ENCODE measurements at regions of chr11 and their contacts with region 1.

Region 1: GRCh38 chr11:107549253-107549953 is 16.1 kb downstream of the ALKBH8 start:
- DNase-seq: peak; percentile 61
- H3K4me3 ChIP-seq: no peak overlapping the region
- H3K27ac ChIP-seq: no peak overlapping the region
- H3K4me1 ChIP-seq: no peaks in the 10 kb centered on the region
- CTCF ChIP-seq: peak; percentile 96

Region 2: DNA sequence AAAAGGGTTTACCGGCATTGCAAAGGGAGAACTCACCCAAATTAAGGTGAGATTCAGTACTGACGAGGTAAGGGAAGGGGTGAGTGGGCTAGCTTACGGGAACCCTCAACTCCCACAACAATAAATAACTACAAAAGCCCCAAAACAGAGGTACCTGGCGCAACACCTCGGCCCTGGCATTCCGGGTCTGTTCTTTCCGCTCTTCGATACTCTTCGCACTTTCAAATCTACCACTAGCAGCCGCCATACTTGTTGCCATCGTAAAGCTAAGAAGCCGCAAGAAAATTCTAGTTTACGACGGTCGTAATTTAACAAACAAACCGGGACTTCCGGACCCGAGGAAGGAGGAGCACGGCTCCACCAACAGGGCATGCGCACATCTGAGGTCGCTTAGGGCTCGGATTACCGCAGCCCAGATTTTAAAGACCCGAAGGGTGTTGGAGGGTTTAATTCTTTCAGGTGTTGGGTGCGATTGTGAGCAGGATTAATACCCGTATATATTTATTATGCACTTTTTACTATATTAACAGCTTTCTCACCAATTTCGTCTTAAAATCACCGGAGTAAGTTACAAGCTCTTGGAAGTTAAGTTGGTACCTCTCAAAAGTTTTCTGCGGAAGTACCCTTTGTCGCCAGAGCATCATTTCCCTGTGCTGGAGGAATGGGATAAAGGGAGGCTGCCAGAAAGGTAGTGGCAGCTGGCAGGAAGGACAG is 91.7 kb before region 1 on chr11 and contains the start of gene CWF19L2:
- CTCF ChIA-PET with region 1: no interaction called
- POLR2A ChIA-PET with region 1: no interaction called
- intact Hi-C with region 1: no loop called
- DNase-seq: peak; percentile 98
- H3K4me3 ChIP-seq: peak within 1 kb of the TSS; percentile 92
- H3K27ac ChIP-seq: peak within 1 kb of the TSS; percentile 77
- H3K4me1 ChIP-seq: peaks cover 16% of the 10 kb centered on the region
- CTCF ChIP-seq: 0 out of 2 replicates have a peak, but pooled peaks have one; percentile 11
- total RNA-seq, gene CWF19L2: 13.4 and 20.6 TPM in 2 replicates

Region 3: GRCh38 chr11:107606141-107606540 is 56.7 kb after region 1 on chr11:
- CTCF ChIA-PET with region 1: no interaction called
- POLR2A ChIA-PET with region 1: interaction called, 8 read pairs
- intact Hi-C with region 1: loop called (anchors 2 kb)
- DNase-seq: no peak
- H3K4me3 ChIP-seq: no peak overlapping the region
- H3K27ac ChIP-seq: no peak overlapping the region
- H3K4me1 ChIP-seq: no peaks in the 10 kb centered on the region
- CTCF ChIP-seq: peak; percentile 48

Region 4: DNA sequence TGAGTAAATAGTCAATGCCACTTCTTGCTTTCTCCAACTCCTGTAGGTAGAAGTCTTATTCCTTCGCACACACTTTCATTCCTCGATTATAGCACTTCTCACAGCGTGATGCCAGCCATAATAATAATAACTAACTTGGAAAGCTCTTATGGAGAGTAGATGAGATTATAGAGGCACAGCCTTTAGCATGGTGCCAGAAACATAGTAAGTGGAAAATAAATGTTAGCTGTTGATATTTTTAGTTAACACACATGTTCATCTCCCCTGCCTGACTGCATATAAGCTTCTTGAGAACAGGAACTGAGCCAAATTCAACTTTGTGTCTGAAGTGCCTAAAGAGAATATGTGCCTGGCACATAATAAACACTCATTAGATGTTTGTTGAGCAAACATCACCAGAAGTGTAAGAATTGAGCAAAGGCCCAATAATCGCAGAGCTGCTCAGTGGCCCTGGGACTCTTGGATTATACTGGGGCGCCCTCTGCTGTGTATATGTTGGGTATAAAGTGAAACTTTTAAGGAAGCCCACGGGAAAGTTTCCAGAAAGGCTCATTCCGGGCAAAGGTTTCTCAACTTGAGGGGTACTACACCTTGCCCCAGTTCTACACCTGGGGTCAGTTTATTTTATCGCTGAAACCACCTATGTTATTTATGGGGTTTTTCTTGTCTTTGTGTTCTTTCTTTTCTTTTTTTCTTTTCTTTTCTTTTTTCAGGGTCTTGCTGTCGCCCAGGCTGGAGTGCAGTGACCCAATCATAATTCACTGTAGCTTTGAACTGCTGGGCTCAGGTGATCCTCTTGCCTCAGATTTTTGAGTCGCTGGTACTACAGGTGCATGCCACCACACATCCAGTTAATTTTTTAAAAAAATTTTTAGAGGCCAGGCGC is 140.2 kb after region 1 on chr11:
- CTCF ChIA-PET with region 1: no interaction called
- POLR2A ChIA-PET with region 1: interaction called, 3 read pairs
- intact Hi-C with region 1: loop called (anchors 1 kb)
- DNase-seq: peak; percentile 61
- H3K4me3 ChIP-seq: no peak overlapping the region
- H3K27ac ChIP-seq: no peak overlapping the region
- H3K4me1 ChIP-seq: no peaks in the 10 kb centered on the region
- CTCF ChIP-seq: peak; percentile 85

Region 5: DNA sequence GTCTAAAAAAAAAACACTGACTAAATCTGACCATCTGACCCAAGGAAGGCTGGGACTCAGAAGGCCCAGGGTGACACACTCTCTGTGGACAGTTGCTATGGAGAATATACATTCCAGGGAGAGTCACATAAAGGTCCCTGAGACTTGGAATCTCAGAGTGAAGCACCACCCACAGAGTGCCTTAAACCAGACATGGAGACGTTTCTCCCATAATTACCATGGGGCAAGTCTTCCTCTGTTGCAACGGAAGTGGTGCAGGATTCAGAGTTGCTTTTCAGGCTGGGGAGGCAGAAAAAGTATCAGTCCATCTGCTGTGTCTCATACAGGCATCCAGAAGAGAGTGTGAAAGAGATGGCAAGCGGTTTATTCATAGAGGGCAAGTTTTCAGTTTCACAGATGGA is 221.1 kb after region 1 on chr11:
- CTCF ChIA-PET with region 1: no interaction called
- POLR2A ChIA-PET with region 1: no interaction called
- intact Hi-C with region 1: loop called (anchors 5 kb)
- DNase-seq: no peak
- H3K4me3 ChIP-seq: no peak overlapping the region
- H3K27ac ChIP-seq: no peak overlapping the region
- H3K4me1 ChIP-seq: no peaks in the 10 kb centered on the region
- CTCF ChIP-seq: no peak